ENCODE measurements at regions of chr1 and their contacts with region 1.

Region 1: GRCh38 chr1:111990878-111991718 is 1.6 kb upstream of the KCND3 start:
- DNase-seq: peak; percentile 84

Region 2: DNA sequence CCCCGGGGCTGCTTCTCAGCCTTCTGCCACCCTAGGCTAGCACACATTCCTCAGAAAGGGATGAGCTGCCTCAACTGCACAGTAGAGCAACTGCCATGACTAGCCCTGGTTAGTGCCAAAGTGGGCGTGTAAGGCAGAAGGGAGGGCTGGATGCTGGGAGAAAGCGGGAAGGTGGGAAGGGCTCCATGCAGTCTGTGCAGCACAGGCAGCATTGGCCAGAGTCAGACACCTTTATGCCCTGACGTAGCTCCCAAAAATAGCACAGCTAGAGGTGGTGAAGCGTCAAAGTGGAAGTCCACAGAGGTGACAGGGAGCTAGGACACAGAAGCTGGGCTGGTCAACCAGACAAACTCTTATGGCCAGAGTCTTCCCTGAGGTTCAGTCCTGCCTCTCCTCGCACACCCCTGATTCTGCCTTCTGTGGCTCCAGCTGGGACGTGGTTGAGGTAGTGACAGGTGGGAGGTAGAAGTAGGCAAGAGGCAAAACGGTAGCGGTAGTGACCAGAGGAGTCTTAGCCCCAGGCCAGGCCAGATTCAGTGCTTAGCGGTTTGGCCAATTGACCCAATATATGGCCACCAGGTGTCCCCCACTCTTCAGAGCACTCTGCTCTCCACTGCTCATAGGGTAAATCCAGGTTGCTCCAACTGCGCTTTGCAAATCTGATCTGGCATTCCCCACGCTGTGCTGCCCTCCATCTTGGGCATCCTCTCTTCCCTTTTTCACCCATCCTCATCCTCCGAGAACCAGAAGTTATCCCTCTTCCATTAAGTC is 189.8 kb before region 1 on chr1:
- intact Hi-C with region 1: loop called (anchors 5 kb)
- DNase-seq: peak; percentile 80

Region 3: DNA sequence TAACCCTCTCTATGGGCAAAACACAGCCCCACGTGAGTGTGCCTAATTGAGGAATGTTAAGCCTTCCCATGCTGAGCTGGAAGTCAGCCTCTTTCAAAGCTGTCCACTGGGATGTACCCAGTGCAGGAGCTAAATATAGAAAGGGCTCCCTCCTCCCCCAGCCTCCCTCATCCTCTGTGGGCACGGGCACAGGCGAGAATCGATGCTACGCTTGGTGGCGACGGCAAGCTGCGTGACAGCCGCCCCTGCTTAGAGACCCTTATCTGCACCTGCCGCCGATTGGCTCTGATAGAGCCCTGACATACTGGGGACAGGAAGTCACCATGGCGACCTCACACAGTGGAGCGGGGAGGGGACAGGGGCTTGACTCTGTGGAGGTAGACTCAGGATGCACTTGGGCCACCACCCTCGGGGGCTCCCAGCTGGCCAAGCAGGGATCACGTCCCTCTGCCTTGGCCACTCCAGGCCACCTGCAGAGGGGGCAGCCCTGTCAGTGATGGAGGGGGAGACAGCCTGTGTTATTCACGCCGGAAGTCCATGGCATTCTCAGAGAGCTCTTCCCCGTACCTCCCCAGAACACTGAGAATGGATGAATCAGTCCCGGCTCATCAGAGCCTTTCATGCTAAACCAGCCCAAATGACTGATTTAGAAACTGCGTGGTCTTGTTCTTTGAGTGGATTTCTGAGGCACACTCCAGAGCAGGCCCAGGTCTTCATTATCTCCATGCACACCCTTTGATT is 86.5 kb before region 1 on chr1:
- intact Hi-C with region 1: loop called (anchors 5 kb)
- DNase-seq: peak; percentile 76

Region 4: DNA sequence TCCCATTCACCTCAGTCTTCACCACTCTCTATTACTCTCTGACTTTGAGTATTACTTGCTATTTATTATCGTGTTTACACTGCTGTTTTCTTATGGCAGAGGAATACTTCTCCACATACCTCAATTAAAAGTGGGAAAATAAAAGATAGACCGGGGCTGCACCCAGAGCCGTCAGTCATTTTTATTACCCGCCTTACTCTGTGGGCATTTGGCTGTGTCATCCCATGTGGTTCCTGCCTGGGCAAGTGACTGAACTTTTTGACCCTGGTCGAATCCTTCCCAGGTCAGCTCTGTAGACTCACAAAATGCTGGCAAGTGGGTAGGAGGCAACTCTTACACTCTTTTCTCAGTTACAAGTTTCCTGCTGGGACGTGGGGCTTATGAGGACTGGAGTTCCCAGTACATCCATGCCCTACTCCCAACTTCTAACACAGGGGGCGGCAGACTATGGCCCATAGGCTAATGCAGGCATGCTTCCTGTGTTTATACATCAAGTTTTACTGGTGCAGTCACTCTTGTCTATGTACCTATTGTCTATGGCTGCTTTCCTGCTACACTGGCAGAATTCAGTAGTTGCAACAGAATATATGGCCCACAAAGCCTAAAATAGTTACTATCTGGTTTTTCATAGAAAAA is 67.8 kb after region 1 on chr1:
- intact Hi-C with region 1: loop called (anchors 5 kb)
- DNase-seq: no peak

Region 5: DNA sequence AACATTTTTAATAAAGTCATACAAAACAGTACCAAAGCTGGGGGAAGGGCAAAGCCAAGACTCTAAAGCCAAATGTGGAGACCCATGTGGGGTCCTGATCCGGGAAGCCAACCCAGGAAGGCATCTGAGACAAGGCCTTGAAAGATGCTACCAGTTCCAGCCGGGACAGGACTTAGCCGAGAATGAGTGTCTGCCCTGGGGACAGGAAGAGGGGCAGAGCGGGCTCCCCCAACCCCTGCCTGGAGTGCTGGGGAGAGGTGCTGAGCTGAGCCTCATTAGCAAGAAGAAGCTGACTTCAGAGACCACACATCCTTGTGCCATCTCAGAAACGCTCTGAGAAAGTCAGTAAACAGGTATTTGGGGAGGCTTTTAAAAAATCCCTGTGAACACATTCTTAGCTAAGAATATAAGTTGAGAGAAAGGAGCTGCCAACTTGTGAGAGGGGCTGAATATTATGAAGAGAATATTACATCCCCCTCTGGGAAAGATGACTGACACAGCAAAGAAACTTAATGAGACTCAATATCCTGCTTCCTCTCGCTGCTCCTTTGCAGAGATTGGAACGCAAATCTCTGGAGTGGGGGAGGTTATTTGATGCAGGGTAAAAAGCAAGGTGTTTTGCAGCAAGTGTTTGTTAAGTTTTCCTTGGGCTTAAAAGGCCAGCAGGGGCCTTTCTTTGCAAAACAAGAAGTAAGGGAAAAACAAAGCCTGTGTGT is 101.7 kb after region 1 on chr1:
- intact Hi-C with region 1: no loop called
- DNase-seq: no peak

Region 6: GRCh38 chr1:112337028-112337531 is 346.0 kb after region 1 on chr1:
- intact Hi-C with region 1: loop called (anchors 2 kb)
- DNase-seq: no peak